Ascending aorta (tissue), 2 donors: ENCODE measurements at regions of chr12 and their contacts with region 1.

Region 1: DNA sequence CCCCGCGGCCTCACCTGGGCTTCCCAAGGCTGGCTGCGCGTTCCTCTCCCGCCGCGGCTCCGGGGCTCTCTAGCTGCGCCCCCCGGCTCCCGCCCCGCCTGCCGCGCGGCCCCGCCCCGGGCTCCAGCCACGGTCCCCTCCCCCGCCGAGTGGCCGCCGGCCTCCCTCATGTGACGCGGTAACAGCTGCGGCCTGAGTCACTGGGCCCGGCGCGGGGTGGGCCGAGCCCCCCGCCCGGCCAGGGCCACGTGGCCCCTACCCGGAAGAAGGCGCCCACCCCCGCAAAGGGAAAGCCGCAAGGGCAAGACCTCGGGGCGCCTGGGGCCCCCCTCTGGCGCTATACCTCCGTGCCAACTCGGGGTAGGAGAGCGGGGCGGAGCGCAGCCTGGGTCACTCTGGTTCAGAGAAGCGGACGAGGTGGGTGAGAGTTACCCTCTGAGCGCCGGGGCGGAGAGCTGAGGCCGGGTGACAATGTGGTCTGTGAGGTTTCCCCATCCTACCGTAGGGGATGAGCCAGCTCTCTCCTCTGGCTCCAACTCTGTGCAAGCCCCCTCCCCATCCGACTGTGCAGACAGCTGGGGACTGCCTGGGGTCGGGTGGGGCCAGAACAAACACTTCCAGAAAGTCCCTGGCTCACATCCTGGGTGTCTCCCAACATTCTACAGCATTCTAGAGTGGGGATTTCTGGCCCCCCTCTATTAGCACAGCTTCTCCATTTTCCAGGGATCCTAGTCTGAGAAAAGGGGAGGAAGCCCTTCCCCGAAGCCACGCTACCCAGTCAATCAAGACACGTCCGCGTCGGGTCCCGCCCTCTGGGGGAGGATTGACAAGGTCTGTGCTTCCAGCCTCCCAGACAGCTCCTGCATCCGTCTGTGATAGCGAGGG is at the start of gene CD63:
- DNase-seq: peak; percentile 79 to 97
- H3K4me3 ChIP-seq: peak within 1 kb of the TSS; percentile 80 to 98
- H3K27ac ChIP-seq: peak within 1 kb of the TSS; percentile 99
- H3K4me1 ChIP-seq: peaks cover 13 to 36% of the 10 kb centered on the region in 2 donors
- H3K27me3 ChIP-seq: no peaks in the 10 kb centered on the region
- CTCF ChIP-seq: no peak
- total RNA-seq, gene CD63: 566 TPM

Region 2: GRCh38 chr12:54431911-54432814 is 1297.0 kb before region 1 on chr12:
- intact Hi-C with region 1: loop called (anchors 10 kb)
- DNase-seq: peak; percentile 79 to 96
- H3K4me3 ChIP-seq: peak overlapping the region in 1 of 2 donors; percentile 36
- H3K27ac ChIP-seq: peak overlapping the region; percentile 97
- H3K4me1 ChIP-seq: peaks cover 23 to 51% of the 10 kb centered on the region in 2 donors
- H3K27me3 ChIP-seq: no peaks in the 10 kb centered on the region
- CTCF ChIP-seq: no peak

Region 3: DNA sequence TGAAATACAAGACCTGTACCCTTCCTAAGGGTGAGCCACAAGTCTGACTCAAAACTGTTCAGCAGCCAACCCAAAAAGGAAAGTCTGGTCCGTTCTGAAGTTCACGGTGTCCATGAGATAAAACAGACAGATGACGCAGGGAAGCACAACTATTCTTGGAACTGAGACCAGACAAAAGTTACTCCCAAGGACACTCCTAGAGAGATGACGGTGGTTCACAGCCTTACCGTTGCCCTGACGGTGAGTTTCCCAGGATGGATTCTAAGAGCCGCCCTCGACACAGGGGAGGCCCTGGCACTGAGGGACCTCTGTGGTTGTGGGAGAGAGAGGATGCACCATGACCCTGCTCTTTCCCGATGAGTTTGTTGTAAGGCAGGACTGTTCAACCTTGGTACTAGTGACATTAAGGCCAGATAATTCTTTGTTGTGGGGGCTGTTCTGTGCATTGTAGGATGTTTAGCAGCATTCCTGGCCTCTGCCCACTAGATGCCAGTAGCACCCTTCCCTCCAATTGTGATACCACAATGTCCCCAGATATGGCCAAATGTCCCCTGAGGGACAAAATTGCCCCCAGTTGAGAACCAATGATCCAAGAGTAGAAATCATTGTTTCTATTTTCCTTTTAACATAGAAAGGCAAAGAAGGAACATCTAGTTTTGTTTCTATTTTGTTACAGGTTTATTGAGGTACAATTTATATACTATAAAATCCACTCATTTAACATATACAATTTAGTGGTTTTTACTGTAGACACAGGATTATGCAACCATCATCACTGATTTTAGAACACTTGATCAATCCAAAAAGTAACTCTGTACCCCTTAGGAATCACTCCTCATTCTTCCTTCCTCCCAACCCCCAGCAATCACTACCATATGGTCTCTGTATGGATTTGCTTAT is 69.4 kb before region 1 on chr12:
- intact Hi-C with region 1: loop called (anchors 5 kb)
- DNase-seq: no peak
- H3K4me3 ChIP-seq: no peak overlapping the region
- H3K27ac ChIP-seq: no peak overlapping the region
- H3K4me1 ChIP-seq: no peaks in the 10 kb centered on the region
- H3K27me3 ChIP-seq: no peaks in the 10 kb centered on the region
- CTCF ChIP-seq: peak in 2 of 3 experiments; percentile 53 to 63

Region 4: DNA sequence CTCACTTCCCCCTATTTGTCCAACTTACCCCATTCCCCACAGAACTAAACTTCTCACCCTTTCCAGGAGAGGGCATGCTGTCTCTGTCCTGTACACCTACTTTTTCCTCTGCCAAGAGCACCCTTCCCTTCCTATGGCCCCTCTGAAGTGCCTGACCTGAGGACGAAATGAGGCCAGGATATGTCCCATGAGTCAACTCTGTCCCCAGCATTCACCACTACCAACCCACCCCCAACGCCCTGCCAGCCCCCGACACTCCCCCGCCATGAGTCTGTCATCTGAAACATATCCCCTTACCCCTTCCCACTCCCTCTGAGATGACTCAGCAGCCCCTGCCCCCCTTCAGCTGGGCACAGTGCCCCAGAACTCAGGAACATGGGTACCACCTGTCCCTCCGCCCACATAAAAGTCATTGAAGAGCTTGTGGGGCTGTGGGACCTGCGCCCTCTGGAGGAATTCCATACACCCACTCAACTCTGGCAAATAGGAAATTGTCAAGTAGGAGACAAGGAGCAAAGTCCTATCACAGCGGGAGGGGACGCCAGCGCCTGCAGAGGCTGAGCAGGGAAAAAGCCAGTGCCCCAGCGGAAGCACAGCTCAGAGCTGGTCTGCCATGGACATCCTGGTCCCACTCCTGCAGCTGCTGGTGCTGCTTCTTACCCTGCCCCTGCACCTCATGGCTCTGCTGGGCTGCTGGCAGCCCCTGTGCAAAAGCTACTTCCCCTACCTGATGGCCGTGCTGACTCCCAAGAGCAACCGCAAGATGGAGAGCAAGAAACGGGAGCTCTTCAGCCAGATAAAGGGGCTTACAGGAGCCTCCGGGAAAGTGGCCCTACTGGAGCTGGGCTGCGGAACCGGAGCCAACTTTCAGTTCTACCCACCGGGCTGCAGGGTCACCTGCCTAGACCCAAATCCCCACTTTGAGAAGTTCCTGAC is 47.8 kb before region 1 on chr12:
- intact Hi-C with region 1: loop called (anchors 2 kb)
- DNase-seq: peak; percentile 38 to 81
- H3K4me3 ChIP-seq: peak overlapping the region; percentile 4 to 34
- H3K27ac ChIP-seq: peak overlapping the region; percentile 4 to 15
- H3K4me1 ChIP-seq: peaks cover 5 to 7% of the 10 kb centered on the region in 2 donors
- H3K27me3 ChIP-seq: no peaks in the 10 kb centered on the region
- CTCF ChIP-seq: peak in 2 of 3 experiments; percentile 9 to 37

Region 5: DNA sequence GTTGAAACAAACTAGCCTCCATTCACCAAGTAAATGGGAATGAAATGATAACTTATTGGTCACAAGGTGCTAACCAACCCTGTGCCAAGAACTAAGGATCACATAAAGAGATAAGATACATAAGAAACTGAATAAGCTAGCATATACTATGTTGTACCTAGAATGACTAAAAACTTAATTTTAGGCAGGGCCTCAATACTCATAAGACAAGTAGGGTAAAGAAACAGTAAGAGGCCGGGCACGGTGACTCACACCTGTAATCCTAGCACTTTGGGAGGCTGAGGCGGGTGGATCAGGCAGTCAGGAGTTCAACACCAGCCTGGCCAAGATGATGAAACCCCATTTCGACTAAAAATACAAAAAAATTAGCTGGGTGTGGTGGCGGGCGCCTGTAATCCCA is 31.5 kb after region 1 on chr12:
- intact Hi-C with region 1: no loop called
- DNase-seq: no peak
- H3K4me3 ChIP-seq: no peak overlapping the region
- H3K27ac ChIP-seq: no peak overlapping the region
- H3K4me1 ChIP-seq: no peaks in the 10 kb centered on the region
- H3K27me3 ChIP-seq: no peaks in the 10 kb centered on the region
- CTCF ChIP-seq: no peak